ENCODE measurements at regions of chr12 and their contacts with region 1.

Region 1: DNA sequence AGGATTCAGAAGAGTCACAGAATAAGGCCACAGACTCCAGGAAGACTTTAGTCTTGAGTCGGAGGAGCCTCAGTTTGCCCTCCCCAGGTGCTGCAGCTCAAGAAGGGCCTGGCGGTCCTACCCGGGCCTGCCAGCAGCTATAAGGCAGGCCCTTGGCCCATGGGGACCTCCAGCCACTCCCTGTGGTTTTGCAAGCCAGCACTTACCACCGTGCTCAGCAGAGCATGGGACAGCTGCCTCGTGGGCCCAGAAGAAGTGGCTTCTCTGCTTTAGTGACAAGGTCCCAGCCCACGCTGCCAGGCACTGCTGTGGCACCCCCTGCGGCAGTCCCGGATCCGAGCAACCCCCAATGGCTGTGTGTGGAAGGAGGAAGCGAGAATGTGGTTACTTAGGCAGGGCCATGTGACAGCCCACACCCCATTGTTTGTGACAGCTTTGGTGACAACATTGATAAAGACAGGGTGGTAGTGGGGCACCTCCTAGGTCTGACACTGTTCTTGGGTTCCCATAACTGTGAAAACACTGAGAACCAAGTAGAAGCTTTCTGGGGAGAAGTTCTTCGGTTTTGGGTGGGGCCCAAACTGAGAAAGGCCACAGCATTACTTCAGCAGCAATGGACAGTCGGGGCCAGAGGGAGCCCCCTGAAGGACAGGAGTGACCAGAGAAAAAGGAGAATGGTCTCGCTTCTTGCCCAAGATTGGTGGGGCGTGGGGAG is at the start of gene SELPLG:
- DNase-seq: peak; percentile 97
- H3K4me3 ChIP-seq: peak within 1 kb of the TSS; percentile 75
- H3K27ac ChIP-seq: peak within 1 kb of the TSS; percentile 99
- H3K4me1 ChIP-seq: peaks cover 88% of the 10 kb centered on the region
- CTCF ChIP-seq: peak; percentile 62; the same call in 1 of the 2 replicates
- total RNA-seq, gene SELPLG: 16.9 and 20.0 TPM in 2 replicates

Region 2: DNA sequence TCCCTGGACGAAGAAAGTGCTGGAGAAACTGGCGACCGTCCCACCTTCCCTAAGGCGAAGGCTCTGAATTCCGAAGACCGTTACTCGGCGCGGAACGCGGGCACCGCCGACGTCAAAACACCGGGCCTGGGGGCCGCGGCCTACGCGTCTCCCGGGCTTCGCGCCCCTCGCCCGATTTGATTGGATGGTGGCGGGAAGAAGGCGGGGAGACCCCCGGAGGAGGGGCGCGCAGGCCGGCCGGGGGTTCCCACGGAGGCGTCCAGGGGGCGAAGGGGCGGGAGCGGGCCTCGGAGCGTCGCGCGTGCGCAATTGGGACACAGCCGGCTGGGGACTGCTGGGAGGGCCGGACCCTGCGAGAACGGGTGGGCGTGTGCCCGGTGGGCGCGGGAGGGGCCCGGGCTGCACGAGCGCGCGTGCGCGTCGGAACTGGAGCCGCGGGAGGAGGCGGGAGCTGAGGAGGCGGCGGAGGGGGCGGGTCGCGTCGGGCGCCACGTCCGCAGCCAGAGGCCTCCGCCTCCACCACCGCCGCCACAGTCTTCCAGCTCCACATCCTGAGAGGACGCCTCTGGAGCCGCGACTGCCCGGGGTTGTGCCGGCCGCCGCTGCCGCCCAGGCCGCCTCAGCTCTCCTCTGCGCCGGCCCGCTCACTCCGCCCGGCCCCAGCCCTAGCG is 1678.2 kb before region 1 on chr12 and contains the start of gene TMEM263:
- CTCF ChIA-PET with region 1: no interaction called
- POLR2A ChIA-PET with region 1: no interaction called
- intact Hi-C with region 1: loop called (anchors 10 kb)
- DNase-seq: peak; percentile 95
- H3K4me3 ChIP-seq: peak within 1 kb of the TSS; percentile 80
- H3K27ac ChIP-seq: peak within 1 kb of the TSS; percentile 82
- H3K4me1 ChIP-seq: peaks cover 26% of the 10 kb centered on the region
- CTCF ChIP-seq: no peak
- total RNA-seq, gene TMEM263: 34.1 and 43.9 TPM in 2 replicates

Region 3: DNA sequence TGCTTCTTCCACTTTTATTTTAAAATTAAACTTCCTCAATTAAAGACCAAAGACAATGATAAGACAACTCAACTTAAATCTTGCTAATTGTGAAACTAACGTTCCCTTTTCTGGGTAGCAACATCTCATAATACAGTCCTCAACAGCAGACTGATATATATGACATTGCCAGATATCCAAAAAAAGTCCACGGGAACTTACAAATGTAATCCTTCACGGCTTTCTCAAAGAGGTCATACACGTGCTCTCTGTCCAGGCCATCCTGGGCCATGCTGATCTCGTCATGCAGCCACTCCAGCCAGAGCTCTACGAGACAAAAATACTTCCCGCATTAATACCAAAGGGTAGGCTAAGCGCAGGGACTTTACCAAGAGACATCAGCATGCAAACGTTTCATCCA is 86.0 kb before region 1 on chr12:
- CTCF ChIA-PET with region 1: no interaction called
- POLR2A ChIA-PET with region 1: interaction called, 18 read pairs
- intact Hi-C with region 1: no loop called
- DNase-seq: no peak
- H3K4me3 ChIP-seq: no peak overlapping the region
- H3K27ac ChIP-seq: no peak overlapping the region
- H3K4me1 ChIP-seq: peaks cover 49% of the 10 kb centered on the region
- CTCF ChIP-seq: no peak

Region 4: DNA sequence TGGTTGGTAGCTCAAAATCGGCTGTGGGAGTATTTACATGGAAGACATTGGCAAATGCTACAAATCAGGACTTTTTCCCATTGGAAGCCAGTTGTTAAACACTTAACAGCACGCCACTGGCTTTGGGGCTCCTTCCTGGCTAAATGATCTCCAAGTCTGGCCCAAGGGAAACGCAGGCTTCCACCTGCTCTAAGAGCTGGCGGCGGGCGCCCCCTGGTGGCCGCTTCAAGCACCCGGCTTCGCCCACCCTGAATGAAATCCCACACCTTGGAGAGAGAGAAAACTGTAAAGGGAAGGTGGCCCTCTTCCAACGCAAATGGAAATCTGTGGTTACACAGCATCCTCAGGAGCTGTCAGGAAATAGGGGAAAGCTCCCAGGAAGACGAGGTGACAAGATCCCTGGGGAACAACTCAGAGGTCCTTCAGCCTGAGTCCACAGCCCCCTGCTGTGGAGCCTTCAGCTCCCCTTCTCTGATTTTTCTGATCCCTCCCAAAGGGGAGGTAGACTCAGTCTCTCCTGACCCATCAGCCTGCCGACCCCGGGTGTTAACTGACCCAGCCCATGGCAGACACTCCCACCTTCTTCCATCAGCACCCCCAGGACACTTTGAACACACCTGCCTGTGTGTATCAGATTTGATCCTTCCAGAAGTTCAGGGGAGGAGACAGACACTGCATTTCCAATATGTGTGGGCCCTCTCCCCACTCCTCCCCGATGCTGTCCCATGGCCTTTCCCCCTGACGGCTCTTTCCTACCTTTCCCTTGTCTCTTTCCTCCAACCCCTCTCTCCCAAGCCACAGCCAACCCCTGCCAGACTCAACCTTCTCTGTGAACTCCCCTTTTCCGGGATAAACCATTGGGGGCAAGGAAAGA is 15.4 kb before region 1 on chr12:
- CTCF ChIA-PET with region 1: interaction called, 18 read pairs
- POLR2A ChIA-PET with region 1: interaction called, 85 read pairs
- intact Hi-C with region 1: loop called (anchors 1 kb)
- DNase-seq: peak; percentile 88
- H3K4me3 ChIP-seq: no peak overlapping the region
- H3K27ac ChIP-seq: peak overlapping the region; percentile 61
- H3K4me1 ChIP-seq: peaks cover 37% of the 10 kb centered on the region
- CTCF ChIP-seq: peak; percentile 100

Region 5: GRCh38 chr12:108664338-108665258 is 30.9 kb after region 1 on chr12:
- CTCF ChIA-PET with region 1: interaction called, 6 read pairs
- POLR2A ChIA-PET with region 1: interaction called, 330 read pairs
- intact Hi-C with region 1: loop called (anchors 1 kb)
- DNase-seq: peak; percentile 92
- H3K4me3 ChIP-seq: peak overlapping the region; percentile 46
- H3K27ac ChIP-seq: peak overlapping the region; percentile 94
- H3K4me1 ChIP-seq: peaks cover 83% of the 10 kb centered on the region
- CTCF ChIP-seq: peak; percentile 99

Region 6: GRCh38 chr12:108765296-108765694 is 131.6 kb after region 1 on chr12:
- CTCF ChIA-PET with region 1: no interaction called
- POLR2A ChIA-PET with region 1: no interaction called
- intact Hi-C with region 1: no loop called
- DNase-seq: no peak
- H3K4me3 ChIP-seq: no peak overlapping the region
- H3K27ac ChIP-seq: no peak overlapping the region
- H3K4me1 ChIP-seq: peaks cover 23% of the 10 kb centered on the region
- CTCF ChIP-seq: no peak

Region 7: DNA sequence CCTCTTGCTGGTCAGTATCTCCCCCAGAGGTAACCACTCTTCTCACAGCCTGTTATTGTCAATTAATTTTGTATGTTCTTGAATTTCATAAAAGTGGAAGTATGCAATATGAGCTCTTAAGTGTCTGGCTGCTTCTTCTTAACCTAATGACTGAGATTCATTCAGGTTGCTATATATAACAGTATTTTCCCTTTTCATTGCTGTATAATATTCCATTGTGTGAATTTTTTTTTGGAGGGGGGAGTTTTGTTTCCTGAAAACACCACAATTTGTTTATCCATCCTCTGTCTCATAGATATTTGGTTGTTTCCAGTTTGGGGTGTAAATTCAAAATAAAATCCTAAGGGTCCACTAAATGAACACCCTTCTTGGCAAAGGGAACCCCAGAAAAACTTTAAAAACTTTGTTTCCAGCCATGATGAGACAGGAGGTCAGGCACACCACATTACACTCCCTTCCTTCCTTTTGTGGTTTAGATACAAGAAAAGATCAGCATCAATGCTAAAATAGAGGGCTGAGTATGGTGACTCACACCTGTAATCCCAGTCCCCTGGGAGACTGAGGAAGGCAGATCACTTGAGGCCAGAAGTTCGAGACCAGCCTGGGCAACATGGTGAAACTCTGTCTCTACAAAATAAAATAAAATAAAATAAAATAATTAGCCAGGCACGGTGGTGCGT is 242.1 kb after region 1 on chr12:
- CTCF ChIA-PET with region 1: no interaction called
- POLR2A ChIA-PET with region 1: no interaction called
- intact Hi-C with region 1: no loop called
- DNase-seq: no peak
- H3K4me3 ChIP-seq: no peak overlapping the region
- H3K27ac ChIP-seq: no peak overlapping the region
- H3K4me1 ChIP-seq: peaks cover 5% of the 10 kb centered on the region
- CTCF ChIP-seq: no peak

Region 8: DNA sequence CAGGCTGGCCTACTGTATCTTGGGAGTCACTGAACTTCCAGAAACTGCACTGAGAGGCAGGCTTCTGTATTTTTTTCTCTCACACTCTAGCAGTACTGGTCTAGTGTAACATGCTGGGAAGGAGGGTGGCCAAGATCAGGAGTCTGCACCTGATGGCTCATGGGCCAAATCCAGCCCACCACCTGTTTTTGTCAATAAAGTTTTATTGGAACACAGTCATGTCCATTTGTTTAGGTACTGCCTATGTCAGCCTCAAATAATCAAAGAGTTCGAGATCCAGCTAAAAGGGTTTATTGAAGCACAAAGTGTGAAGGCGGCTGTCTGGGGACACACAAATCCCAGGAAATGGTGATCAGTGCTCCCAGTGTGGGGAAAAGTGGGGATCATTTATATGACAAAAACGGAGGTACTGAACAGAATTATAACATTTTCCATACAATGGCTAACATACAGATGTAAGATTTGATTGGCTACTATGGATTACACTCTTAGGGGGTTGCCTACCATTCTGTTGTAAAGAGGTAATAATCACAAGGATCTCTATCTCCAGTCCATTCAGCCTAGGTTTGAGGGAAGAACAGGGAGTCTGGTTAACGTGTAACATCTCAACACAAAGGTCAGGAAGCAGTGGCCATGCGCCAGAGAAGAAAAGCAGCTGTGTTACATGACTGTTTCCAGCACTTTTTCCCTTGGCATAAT is 431.6 kb after region 1 on chr12:
- CTCF ChIA-PET with region 1: no interaction called
- POLR2A ChIA-PET with region 1: interaction called, 6 read pairs
- intact Hi-C with region 1: loop called (anchors 2 kb)
- DNase-seq: no peak
- H3K4me3 ChIP-seq: no peak overlapping the region
- H3K27ac ChIP-seq: peak overlapping the region; percentile 94
- H3K4me1 ChIP-seq: peaks cover 63% of the 10 kb centered on the region
- CTCF ChIP-seq: no peak

Measured in OCI-LY7 (cell line).